ENCODE measurements at regions of chr3 and their contacts with region 1.

Region 1: DNA sequence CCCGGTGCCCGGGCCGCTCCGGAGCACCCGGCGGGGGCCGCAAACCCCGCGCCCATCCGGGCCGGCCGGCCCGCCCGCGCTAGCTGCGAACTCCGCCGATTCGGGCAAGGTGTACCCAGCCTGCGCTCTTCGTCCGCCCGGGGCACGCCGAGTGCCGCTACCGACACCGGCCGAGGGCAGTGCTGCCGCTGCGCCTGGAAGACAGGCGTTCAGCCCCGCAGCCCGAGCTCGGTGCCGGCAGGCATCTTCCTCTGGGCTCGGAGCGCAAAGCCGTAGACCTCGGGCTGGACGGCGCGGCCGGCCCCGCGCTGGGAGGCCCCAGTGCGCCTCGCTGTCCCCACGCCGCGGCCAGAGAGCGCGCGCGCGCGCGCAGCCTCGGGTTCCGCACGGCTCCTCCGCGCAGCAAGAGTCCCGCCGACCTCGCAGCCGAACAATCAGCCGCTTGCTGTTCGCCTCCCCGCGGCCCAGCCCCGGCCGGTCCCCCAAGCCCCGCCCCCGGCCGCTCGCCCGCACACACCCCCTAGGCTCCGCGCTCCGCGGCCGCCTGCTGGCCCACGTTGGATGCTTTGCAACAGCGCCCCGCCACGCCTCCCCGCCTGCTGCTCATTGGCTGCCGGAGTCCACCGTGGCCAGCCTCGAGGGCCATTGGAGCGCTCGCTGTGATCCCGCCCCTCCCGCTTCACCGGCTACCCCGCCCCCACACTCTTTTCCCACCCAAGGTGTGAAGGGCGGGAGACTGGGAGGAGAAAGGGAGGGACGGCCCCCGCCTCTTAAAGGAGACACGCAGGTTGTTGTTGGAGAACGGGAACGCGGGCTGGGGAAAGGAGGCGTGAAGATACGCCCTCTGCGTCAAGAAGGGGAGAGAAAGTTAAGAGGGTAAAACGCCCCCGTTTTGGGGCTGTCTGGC is at the start of gene LRIG1:
- DNase-seq: peak; percentile 97 to 98 (median 97)
- H3K4me3 ChIP-seq: peak within 1 kb of the TSS; percentile 9 to 72
- H3K4me3 Mint-ChIP-seq: peak within 1 kb of the TSS; percentile 93 to 99 (median 98)
- H3K27ac ChIP-seq: peak within 1 kb of the TSS; percentile 61
- H3K27ac Mint-ChIP-seq: peak within 1 kb of the TSS; percentile 82 to 96 (median 89)
- H3K4me1 ChIP-seq: peaks cover 61% of the 10 kb centered on the region
- H3K4me1 Mint-ChIP-seq: peaks cover 50 to 73% (median 59%) of the 10 kb centered on the region in 4 donors
- H3K27me3 ChIP-seq: no peaks in the 10 kb centered on the region
- H3K27me3 Mint-ChIP-seq: no peaks in the 10 kb centered on the region
- total RNA-seq, gene LRIG1: 66.3 to 71.7 TPM

Region 2: DNA sequence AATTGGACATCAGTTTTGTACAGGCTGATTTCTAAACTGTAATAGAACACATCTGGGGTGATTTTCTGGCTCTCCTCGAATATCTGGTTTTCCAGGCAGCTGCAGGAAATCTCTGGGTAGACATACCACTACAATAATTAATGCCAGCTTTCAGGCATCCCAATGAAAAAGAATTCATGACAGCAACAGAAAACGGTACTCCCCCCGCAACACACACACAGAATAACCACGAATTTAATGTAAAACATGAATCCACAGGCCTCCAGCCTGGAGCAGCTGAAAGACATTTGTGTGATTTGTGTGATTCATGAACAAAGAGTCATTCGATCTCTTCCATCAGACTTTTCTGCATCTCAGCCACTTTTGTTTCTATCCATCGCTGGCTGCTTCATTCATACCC is 724.3 kb before region 1 on chr3:
- CTCF ChIA-PET with region 1: no interaction called
- POLR2A ChIA-PET with region 1: no interaction called
- intact Hi-C with region 1: no loop called
- DNase-seq: no peak
- H3K4me3 ChIP-seq: no peak overlapping the region
- H3K4me3 Mint-ChIP-seq: no peak overlapping the region
- H3K27ac ChIP-seq: no peak overlapping the region
- H3K27ac Mint-ChIP-seq: no peak overlapping the region
- H3K4me1 ChIP-seq: no peaks in the 10 kb centered on the region
- H3K4me1 Mint-ChIP-seq: peaks cover 0 to 4% (median 0%) of the 10 kb centered on the region in 4 donors
- H3K27me3 ChIP-seq: no peaks in the 10 kb centered on the region
- H3K27me3 Mint-ChIP-seq: no peaks in the 10 kb centered on the region

Region 3: DNA sequence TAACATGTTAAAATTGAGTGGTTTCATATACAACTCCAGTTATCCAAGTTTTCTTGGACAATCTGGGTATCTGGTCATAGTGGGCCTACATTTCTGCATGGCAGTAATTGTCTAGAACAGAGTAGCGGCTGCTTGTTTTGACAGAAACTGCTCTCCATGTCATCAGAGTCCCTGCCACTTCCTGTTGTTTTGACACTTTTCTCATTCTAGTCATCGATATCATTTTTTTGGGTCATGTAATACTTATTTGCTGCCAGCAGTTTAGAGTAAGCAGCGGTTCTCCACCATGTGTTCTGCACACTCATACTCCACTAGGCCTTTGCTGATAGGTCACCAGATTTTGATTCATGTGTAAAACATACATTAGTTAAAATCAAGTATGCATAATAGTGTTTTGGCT is 198.5 kb before region 1 on chr3:
- CTCF ChIA-PET with region 1: interaction called, 3 read pairs
- POLR2A ChIA-PET with region 1: interaction called, 9 read pairs
- intact Hi-C with region 1: loop called (anchors 1 kb)
- DNase-seq: peak; percentile 81 to 88 (median 83)
- H3K4me3 ChIP-seq: no peak overlapping the region
- H3K4me3 Mint-ChIP-seq: peak overlapping the region in 7 of 8 donors; percentile 11 to 79 (median 68)
- H3K27ac ChIP-seq: peak overlapping the region; percentile 73
- H3K27ac Mint-ChIP-seq: peak overlapping the region in 3 of 7 donors; percentile 97 to 99 (median 98)
- H3K4me1 ChIP-seq: peaks cover 93% of the 10 kb centered on the region
- H3K4me1 Mint-ChIP-seq: peaks cover 22 to 71% (median 43%) of the 10 kb centered on the region in 4 donors
- H3K27me3 ChIP-seq: no peaks in the 10 kb centered on the region
- H3K27me3 Mint-ChIP-seq: no peaks in the 10 kb centered on the region

Region 4: GRCh38 chr3:66464512-66464894 is 36.3 kb before region 1 on chr3:
- CTCF ChIA-PET with region 1: no interaction called
- POLR2A ChIA-PET with region 1: interaction called, 3 read pairs
- intact Hi-C with region 1: loop called (anchors 5 kb)
- DNase-seq: no peak
- H3K4me3 ChIP-seq: no peak overlapping the region
- H3K4me3 Mint-ChIP-seq: no peak overlapping the region
- H3K27ac ChIP-seq: no peak overlapping the region
- H3K27ac Mint-ChIP-seq: peak overlapping the region in 1 of 7 donors; percentile 36
- H3K4me1 ChIP-seq: peaks cover 29% of the 10 kb centered on the region
- H3K4me1 Mint-ChIP-seq: peaks cover 40 to 85% (median 57%) of the 10 kb centered on the region in 4 donors
- H3K27me3 ChIP-seq: no peaks in the 10 kb centered on the region
- H3K27me3 Mint-ChIP-seq: no peaks in the 10 kb centered on the region

Region 5: GRCh38 chr3:66490214-66490613 is 10.6 kb before region 1 on chr3:
- CTCF ChIA-PET with region 1: interaction called, 12 read pairs
- POLR2A ChIA-PET with region 1: interaction called, 51 read pairs
- intact Hi-C with region 1: loop called (anchors 1 kb)
- DNase-seq: peak in 1 of 5 donors; percentile 37
- H3K4me3 ChIP-seq: peak overlapping the region; percentile 18 to 30
- H3K4me3 Mint-ChIP-seq: peak overlapping the region; percentile 74 to 93 (median 82)
- H3K27ac ChIP-seq: peak overlapping the region; percentile 31
- H3K27ac Mint-ChIP-seq: peak overlapping the region; percentile 30 to 91 (median 61)
- H3K4me1 ChIP-seq: peaks cover 100% of the 10 kb centered on the region
- H3K4me1 Mint-ChIP-seq: peaks cover 71 to 98% (median 86%) of the 10 kb centered on the region in 4 donors
- H3K27me3 ChIP-seq: no peaks in the 10 kb centered on the region
- H3K27me3 Mint-ChIP-seq: no peaks in the 10 kb centered on the region

Region 6: GRCh38 chr3:66520724-66521123 is 19.9 kb after region 1 on chr3:
- CTCF ChIA-PET with region 1: no interaction called
- POLR2A ChIA-PET with region 1: no interaction called
- intact Hi-C with region 1: no loop called
- DNase-seq: no peak
- H3K4me3 ChIP-seq: no peak overlapping the region
- H3K4me3 Mint-ChIP-seq: no peak overlapping the region
- H3K27ac ChIP-seq: no peak overlapping the region
- H3K27ac Mint-ChIP-seq: no peak overlapping the region
- H3K4me1 ChIP-seq: no peaks in the 10 kb centered on the region
- H3K4me1 Mint-ChIP-seq: peaks cover 0 to 5% (median 2%) of the 10 kb centered on the region in 4 donors
- H3K27me3 ChIP-seq: no peaks in the 10 kb centered on the region
- H3K27me3 Mint-ChIP-seq: peaks cover 5% of the 10 kb centered on the region in 2 donors

Region 7: DNA sequence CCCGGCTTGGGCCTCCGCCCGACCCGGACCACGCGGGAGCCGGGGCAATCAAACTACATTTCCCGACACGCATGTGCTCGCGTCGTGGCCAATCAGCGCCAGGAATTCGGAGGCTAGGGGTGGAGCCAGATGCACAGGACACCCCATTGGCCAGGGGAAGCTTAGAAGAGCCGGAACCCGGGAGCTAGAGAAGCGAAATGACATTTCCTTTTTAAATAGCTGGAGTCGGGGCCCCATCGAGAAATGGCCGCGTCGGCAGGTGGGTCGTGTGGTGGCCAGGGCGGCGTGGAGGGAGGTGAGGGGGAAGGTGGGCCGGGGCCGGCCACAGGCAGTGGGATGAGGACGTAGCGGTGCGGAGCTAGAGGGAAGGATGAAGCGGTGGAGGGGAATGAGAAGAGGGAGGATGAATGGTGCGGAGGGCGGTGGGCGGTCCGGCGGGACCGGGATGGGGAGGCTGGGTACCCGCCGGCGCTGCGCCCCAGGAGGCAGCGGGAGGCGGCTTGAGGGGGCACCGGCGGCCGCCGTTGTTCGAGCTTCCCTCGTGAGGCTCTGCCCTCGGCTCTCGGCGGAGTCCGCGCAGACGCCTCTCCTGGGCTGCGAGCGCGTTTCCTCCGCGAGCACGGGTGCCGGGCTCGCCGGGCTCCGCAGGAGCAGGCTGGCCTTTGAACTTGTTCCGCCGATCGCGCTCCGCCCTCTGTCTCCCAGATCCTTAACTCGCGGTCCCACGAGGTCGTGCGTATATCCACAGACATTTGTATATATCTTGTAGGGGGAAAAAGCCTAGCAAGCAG is 497.5 kb after region 1 on chr3 and contains the start of gene KBTBD8:
- CTCF ChIA-PET with region 1: no interaction called
- POLR2A ChIA-PET with region 1: no interaction called
- intact Hi-C with region 1: loop called (anchors 2 kb)
- DNase-seq: peak; percentile 98 to 99 (median 98)
- H3K4me3 ChIP-seq: peak within 1 kb of the TSS; percentile 57 to 85
- H3K4me3 Mint-ChIP-seq: peak within 1 kb of the TSS; percentile 90 to 96 (median 94)
- H3K27ac ChIP-seq: peak within 1 kb of the TSS; percentile 67
- H3K27ac Mint-ChIP-seq: peak within 1 kb of the TSS; percentile 88 to 97 (median 95)
- H3K4me1 ChIP-seq: peaks cover 39% of the 10 kb centered on the region
- H3K4me1 Mint-ChIP-seq: peaks cover 23 to 48% (median 30%) of the 10 kb centered on the region in 4 donors
- H3K27me3 ChIP-seq: peaks cover 3% of the 10 kb centered on the region
- H3K27me3 Mint-ChIP-seq: peaks cover 0 to 4% of the 10 kb centered on the region in 2 donors
- total RNA-seq, gene KBTBD8: 8.3 to 10.8 TPM

Measured in CD4-positive, alpha-beta memory T cell (primary cell).